Thyroid gland (tissue), 4 donors: ENCODE measurements at regions of chr2 and their contacts with region 1.

Region 1: GRCh38 chr2:84495539-84496146 is 20.7 kb upstream of the DNAH6 start:
- DNase-seq: peak; percentile 24 to 44
- H3K4me3 ChIP-seq: no peak overlapping the region
- H3K27ac ChIP-seq: no peak overlapping the region
- H3K4me1 ChIP-seq: peaks cover 0 to 4% of the 10 kb centered on the region in 2 donors
- H3K27me3 ChIP-seq: no peaks in the 10 kb centered on the region
- CTCF ChIP-seq: peak in 5 of 6 experiments; percentile 29 to 83 (median 68)
- POLR2A ChIP-seq: no peak

Region 2: DNA sequence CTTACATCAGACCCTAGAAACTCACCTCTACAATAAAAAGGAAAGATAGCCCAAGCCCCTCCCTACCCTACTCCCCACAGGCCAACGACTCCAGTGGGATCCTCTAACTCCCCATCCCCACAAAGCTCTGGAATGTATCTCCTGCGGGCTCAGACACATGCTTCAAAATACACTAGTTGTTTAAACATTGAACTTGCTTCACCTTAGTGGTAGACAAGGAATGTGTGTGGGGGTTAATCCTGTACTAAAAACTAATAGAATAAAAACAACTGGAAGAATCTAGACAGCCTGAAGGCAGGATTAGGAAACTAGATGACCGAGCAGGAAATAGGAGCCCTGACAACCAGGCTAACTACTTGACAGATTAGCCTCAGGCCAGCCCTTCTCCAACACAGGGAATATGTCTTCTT is 248.1 kb before region 1 on chr2:
- intact Hi-C with region 1: no loop called
- DNase-seq: no peak
- H3K4me3 ChIP-seq: no peak overlapping the region
- H3K27ac ChIP-seq: no peak overlapping the region
- H3K4me1 ChIP-seq: no peaks in the 10 kb centered on the region
- H3K27me3 ChIP-seq: no peaks in the 10 kb centered on the region
- CTCF ChIP-seq: no peak
- POLR2A ChIP-seq: no peak

Region 3: DNA sequence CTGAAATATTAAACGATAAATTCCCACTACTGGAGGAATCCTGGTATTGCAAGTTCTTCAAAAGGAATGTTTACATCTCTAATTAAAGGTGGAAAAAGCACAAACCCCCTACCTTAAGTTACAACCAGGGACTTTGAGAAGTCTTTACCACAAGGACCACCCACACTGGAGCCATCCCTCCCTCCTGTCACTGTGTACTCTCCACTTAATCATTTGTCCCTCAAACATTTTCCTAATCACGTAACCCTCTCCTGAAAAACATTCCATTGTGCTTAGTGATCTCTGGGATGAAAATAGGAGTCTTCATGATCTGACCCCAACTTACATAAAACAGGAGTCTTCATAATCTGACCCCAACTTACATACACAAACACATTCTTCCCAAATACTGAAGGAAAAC is 122.3 kb before region 1 on chr2:
- intact Hi-C with region 1: no loop called
- DNase-seq: no peak
- H3K4me3 ChIP-seq: no peak overlapping the region
- H3K27ac ChIP-seq: no peak overlapping the region
- H3K4me1 ChIP-seq: no peaks in the 10 kb centered on the region
- H3K27me3 ChIP-seq: no peaks in the 10 kb centered on the region
- CTCF ChIP-seq: no peak
- POLR2A ChIP-seq: no peak

Region 4: DNA sequence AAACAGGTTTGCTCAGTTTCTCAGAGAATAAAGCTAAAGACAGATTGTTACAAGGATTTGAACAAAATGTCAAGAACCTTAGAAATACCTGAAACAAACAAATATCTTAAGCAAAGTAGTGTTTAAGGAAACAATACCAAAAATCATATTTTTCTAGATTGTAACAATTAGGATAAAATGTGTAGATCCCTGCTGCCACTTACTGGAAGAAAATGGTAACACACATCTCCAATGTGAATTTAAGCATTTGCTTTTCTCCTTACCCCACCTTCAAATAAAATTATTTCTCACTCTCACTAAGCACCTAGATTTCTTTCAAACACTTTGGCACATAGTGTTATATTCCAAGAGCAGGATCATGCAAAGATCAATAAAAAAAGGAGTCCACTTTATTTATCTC is 71.5 kb before region 1 on chr2:
- intact Hi-C with region 1: no loop called
- DNase-seq: no peak
- H3K4me3 ChIP-seq: no peak overlapping the region
- H3K27ac ChIP-seq: no peak overlapping the region
- H3K4me1 ChIP-seq: peaks cover 0 to 7% of the 10 kb centered on the region in 2 donors
- H3K27me3 ChIP-seq: no peaks in the 10 kb centered on the region
- CTCF ChIP-seq: peak in 4 of 6 experiments; percentile 26 to 67 (median 57)
- POLR2A ChIP-seq: no peak

Region 5: DNA sequence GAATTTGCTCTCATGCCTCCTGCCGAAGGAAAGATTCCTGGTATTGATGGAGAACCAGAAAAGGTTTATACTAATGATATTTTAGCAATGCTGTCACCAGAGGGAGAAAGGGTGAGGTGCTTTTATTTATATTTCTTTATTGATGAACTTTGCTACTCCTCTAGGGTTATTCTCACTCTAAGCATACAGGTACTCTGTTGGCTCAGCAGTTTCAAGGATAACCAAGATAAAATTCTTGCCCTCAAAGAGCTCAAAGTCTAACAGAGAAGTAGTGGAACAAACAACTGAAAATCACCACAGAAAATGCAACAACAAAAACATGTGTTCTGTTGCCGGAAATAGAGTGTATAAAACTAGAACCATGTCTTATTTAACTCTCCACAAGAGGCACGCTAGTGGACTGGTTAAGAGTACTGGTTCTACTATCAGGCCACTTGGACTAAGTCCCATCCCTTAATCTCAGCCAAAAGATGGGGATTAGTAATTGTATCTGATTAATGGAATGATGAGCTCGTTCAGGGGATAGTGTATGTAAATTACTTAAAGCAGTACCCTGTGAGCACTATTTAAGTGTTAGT is 124.2 kb after region 1 on chr2:
- intact Hi-C with region 1: loop called (anchors 10 kb)
- DNase-seq: no peak
- H3K4me3 ChIP-seq: no peak overlapping the region
- H3K27ac ChIP-seq: no peak overlapping the region
- H3K4me1 ChIP-seq: no peaks in the 10 kb centered on the region
- H3K27me3 ChIP-seq: no peaks in the 10 kb centered on the region
- CTCF ChIP-seq: no peak
- POLR2A ChIP-seq: no peak

Region 6: GRCh38 chr2:84881581-84882414 is 386.2 kb after region 1 on chr2:
- intact Hi-C with region 1: loop called (anchors 5 kb)
- DNase-seq: peak; percentile 81 to 86
- H3K4me3 ChIP-seq: peak overlapping the region; percentile 8 to 52 (median 10)
- H3K27ac ChIP-seq: no peak overlapping the region
- H3K4me1 ChIP-seq: peaks cover 15 to 21% of the 10 kb centered on the region in 2 donors
- H3K27me3 ChIP-seq: no peaks in the 10 kb centered on the region
- CTCF ChIP-seq: peak; percentile 35 to 77 (median 66)
- POLR2A ChIP-seq: no peak